Activated naive CD4-positive, alpha-beta T cell treated with anti-CD3 and anti-CD28 coated beads for 36 hours (primary cell): ENCODE measurements at regions of chr4 and their contacts with region 1.

Region 1: DNA sequence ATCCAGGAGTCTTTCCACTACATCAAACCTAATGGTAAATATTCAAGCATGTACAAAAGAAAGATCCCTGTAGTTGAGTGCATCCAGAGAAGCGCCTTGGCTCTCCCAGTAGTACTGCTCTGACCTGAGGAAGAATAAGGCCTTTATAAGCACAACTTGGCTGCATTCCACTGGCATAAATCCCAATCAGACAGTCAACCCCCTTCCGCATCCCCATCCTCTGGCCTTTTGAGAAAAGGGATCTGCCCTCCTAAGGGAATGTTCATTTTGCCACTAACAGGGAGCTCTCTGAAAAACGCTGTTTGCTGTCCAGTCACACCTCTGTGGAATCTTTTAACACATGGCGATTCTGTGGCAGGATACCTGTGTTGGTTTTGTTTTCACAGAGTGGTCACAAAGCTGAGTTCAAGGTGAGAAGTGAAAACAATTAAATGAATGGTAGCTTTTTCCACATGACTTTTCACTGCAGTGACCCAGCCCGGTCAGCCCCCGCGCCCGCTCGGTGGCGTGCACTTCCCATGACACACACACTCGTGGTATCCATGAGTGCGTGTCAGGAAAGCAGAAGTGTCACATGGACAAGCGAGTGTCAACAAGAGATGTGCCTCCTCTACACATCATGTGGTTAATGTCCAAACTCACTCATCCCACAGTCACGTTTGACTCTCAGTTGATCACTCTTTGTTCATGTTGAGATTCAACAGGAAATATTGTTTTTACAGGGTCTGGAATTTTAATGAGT is 112.2 kb upstream of the ENPP6 start:
- DNase-seq: no peak
- H3K4me3 Mint-ChIP-seq: no peak overlapping the region
- H3K27ac Mint-ChIP-seq: no peak overlapping the region
- H3K4me1 Mint-ChIP-seq: peaks cover 27% of the 10 kb centered on the region
- H3K27me3 Mint-ChIP-seq: no peaks in the 10 kb centered on the region

Region 2: GRCh38 chr4:184188443-184189328 is 141.1 kb before region 1 on chr4:
- CTCF ChIA-PET with region 1: no interaction called
- intact Hi-C with region 1: no loop called
- DNase-seq: no peak
- H3K4me3 Mint-ChIP-seq: no peak overlapping the region
- H3K27ac Mint-ChIP-seq: no peak overlapping the region
- H3K4me1 Mint-ChIP-seq: no peaks in the 10 kb centered on the region
- H3K27me3 Mint-ChIP-seq: no peaks in the 10 kb centered on the region

Region 3: GRCh38 chr4:184287697-184288255 is 42.1 kb before region 1 on chr4:
- CTCF ChIA-PET with region 1: interaction called, 4 read pairs
- intact Hi-C with region 1: loop called (anchors 1 kb)
- DNase-seq: no peak
- H3K4me3 Mint-ChIP-seq: no peak overlapping the region
- H3K27ac Mint-ChIP-seq: no peak overlapping the region
- H3K4me1 Mint-ChIP-seq: peaks cover 52% of the 10 kb centered on the region
- H3K27me3 Mint-ChIP-seq: peaks cover 4% of the 10 kb centered on the region

Region 4: DNA sequence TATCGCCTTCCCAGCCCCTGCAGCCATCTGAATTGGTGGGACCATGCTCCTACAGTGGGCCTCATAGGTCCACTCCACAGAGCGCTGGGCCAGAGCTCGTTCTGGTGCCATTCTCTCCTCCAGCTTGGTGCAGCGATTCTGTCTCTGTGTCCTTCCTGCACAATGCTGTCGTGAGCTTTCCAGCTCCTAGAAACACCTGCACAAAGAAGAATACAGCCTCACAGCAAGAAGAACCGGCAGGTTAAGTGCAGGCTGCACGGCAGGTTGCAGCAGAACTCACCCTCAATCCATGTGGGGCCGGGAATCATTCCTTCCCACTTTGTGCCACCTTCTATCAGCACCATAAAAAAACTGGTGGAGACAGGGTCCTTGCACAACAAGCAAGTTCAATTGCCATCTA is 11.0 kb before region 1 on chr4:
- CTCF ChIA-PET with region 1: no interaction called
- intact Hi-C with region 1: loop called (anchors 1 kb)
- DNase-seq: no peak
- H3K4me3 Mint-ChIP-seq: no peak overlapping the region
- H3K27ac Mint-ChIP-seq: no peak overlapping the region
- H3K4me1 Mint-ChIP-seq: peaks cover 36% of the 10 kb centered on the region
- H3K27me3 Mint-ChIP-seq: peaks cover 2% of the 10 kb centered on the region

Region 5: GRCh38 chr4:184343502-184344177 is 13.8 kb after region 1 on chr4:
- CTCF ChIA-PET with region 1: interaction called, 7 read pairs
- intact Hi-C with region 1: loop called (anchors 1 kb)
- DNase-seq: peak; percentile 61
- H3K4me3 Mint-ChIP-seq: peak overlapping the region; percentile 77
- H3K27ac Mint-ChIP-seq: peak overlapping the region; percentile 60
- H3K4me1 Mint-ChIP-seq: peaks cover 14% of the 10 kb centered on the region
- H3K27me3 Mint-ChIP-seq: peaks cover 3% of the 10 kb centered on the region

Region 6: DNA sequence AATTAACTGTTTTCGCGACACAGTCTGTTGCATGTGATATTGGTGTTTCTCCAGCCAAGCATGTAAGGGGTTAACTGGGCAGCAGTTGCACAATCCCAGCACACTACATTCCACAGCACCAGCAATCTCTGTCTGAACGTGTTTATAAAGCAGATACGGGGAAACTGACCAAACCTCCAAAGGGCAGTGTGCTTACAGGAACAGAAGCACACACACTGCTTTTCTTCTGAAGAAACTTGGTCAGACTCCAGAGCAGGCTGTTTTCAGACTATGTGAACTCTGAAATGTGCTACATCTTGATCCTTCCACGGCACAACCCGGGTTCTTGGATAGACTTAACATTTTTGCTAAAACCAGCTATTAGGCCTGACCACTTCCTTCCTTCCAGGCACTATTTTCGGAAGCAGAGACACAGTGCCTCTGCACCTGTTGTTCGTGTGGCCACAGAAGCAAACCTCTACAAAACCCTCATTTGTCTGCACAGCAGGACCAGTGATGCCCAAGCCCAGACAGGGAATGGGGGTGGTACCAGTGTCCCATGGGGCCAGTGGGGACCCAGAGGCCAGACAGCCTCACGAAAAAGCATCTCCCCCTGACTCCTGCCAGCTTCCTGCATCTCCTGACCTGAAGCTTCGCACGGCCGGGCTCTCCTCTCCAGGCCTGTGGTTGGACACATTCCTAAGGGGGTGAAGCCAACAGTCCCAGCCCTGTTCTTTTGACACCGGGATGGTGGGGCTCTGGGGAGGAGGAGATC is 54.4 kb after region 1 on chr4:
- CTCF ChIA-PET with region 1: interaction called, 3 read pairs
- intact Hi-C with region 1: loop called (anchors 5 kb)
- DNase-seq: peak; percentile 38
- H3K4me3 Mint-ChIP-seq: no peak overlapping the region
- H3K27ac Mint-ChIP-seq: no peak overlapping the region
- H3K4me1 Mint-ChIP-seq: peaks cover 61% of the 10 kb centered on the region
- H3K27me3 Mint-ChIP-seq: no peaks in the 10 kb centered on the region